HepG2 (cell line): ENCODE measurements at regions of chr6 and their contacts with region 1.

Region 1: GRCh38 chr6:35342258-35343091 is at the start of gene PPARD:
- DNase-seq: peak; percentile 93
- ATAC-seq: peak; percentile 95
- H3K4me3 ChIP-seq: peak within 1 kb of the TSS; percentile 74 to 89 (median 87)
- H3K27ac ChIP-seq: peak within 1 kb of the TSS; percentile 46
- H3K4me1 ChIP-seq: peaks cover 40% of the 10 kb centered on the region
- H3K27me3 ChIP-seq: no peaks in the 10 kb centered on the region; a peak in 1 of 5 replicates
- CTCF ChIP-seq: peak; percentile 100
- EP300 ChIP-seq: peak in 1 of 2 experiments; percentile 36; a peak in 1 of 4 replicates
- POLR2A ChIP-seq: peak; percentile 59 to 66
- RAD21 ChIP-seq: peak; percentile 100
- total RNA-seq, gene PPARD: 5.8 and 6.1 TPM in 2 replicates

Region 2: DNA sequence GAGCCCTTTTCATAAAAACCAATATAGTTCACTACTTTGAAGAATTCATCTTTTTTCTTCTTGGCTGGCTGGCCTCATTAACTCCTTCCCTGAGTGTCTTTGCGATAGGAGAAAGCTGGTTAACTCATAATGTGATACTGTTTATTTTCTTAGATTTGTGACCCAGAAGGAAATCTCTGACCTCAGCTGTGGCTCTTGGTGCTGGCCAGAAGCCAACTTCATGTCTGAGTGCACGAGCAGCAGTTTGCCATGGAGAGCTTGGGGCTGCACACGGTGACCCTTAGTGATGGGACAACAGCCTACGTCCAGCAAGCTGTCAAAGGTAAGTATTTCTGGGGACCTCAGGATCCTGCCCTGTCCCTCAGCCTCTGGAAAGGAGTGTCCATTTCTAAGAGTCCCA is 61.6 kb before region 1 on chr6:
- CTCF ChIA-PET with region 1: no interaction called
- POLR2A ChIA-PET with region 1: no interaction called
- in situ Hi-C with region 1: no loop called
- intact Hi-C with region 1: no loop called
- DNase-seq: no peak
- ATAC-seq: no peak
- H3K4me3 ChIP-seq: no peak overlapping the region
- H3K27ac ChIP-seq: no peak overlapping the region
- H3K4me1 ChIP-seq: no peaks in the 10 kb centered on the region
- H3K27me3 ChIP-seq: no peaks in the 10 kb centered on the region
- CTCF ChIP-seq: no peak
- EP300 ChIP-seq: no peak
- POLR2A ChIP-seq: no peak
- RAD21 ChIP-seq: no peak

Region 3: DNA sequence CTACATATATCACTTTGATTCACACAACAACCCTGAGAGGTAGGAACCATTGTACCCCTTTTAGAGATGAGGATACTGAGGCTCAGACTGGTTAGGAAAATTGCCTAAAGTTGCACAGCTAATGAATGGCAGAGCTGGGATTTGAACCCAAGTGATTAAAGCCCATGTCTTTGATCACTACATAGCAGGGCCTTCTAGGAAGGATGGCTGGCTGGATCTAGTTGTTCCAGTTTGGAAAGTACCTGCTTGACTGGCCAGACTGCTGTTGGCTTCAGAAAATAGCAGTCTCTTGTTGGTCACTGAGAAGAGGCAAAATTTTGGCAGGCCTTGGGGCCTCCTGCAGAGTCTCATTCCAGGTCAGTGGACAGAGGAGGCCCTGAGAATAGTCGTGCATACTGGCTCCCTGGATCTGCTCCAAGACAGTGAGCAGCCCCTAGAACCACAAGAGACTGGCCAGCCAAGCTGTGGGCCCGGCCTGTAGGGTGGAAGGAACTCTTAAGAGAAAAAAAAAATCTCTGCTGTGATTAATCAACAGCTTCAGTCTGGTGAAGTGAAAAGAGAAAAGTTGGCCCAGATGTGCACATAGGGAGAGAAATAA is 17.4 kb after region 1 on chr6:
- CTCF ChIA-PET with region 1: no interaction called
- POLR2A ChIA-PET with region 1: no interaction called
- in situ Hi-C with region 1: no loop called
- intact Hi-C with region 1: no loop called
- DNase-seq: no peak
- ATAC-seq: peak; percentile 35
- H3K4me3 ChIP-seq: no peak overlapping the region
- H3K27ac ChIP-seq: peak overlapping the region; percentile 67
- H3K4me1 ChIP-seq: peaks cover 28% of the 10 kb centered on the region
- H3K27me3 ChIP-seq: no peaks in the 10 kb centered on the region
- CTCF ChIP-seq: no peak
- EP300 ChIP-seq: no peak
- POLR2A ChIP-seq: no peak
- RAD21 ChIP-seq: no peak

Region 4: DNA sequence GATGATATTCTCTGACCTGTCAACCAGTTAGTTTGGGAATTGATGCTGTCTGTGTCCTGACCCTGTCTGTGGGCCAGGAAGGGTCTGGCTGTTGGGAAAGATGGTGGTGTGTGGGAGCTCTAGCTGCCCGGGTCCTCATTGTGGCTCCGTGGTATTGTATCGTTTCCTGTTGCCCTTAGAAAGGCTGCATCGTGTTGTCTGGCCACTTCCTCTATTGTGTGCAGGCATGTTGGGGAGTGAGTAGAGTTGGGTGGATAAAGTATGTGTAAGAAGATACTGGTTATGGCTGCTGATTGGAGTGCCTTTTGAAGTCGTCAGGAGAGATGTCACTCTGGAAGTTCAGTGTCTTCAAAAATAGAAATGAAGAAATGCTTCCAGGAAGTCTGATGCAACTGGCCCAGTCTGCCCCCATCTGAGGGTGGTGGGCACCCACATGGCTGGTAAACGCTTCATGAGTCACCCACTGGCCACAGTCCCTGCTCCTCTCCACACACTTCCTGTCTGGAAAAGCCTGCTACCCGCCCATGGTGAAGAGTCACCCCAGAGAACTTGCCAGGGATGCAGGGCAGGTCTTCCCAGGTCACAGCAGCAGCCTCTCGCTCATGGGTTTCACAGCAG is 27.8 kb after region 1 on chr6:
- CTCF ChIA-PET with region 1: no interaction called
- POLR2A ChIA-PET with region 1: interaction called, 18 read pairs
- in situ Hi-C with region 1: no loop called
- intact Hi-C with region 1: no loop called
- DNase-seq: peak; percentile 65
- ATAC-seq: peak; percentile 6; the same call in 1 of the 3 replicates
- H3K4me3 ChIP-seq: no peak overlapping the region
- H3K27ac ChIP-seq: peak overlapping the region; percentile 84
- H3K4me1 ChIP-seq: peaks cover 78% of the 10 kb centered on the region
- H3K27me3 ChIP-seq: no peaks in the 10 kb centered on the region
- CTCF ChIP-seq: no peak
- EP300 ChIP-seq: peak in 1 of 2 experiments; percentile 55; a peak in 1 of 4 replicates
- POLR2A ChIP-seq: no peak
- RAD21 ChIP-seq: no peak

Region 5: DNA sequence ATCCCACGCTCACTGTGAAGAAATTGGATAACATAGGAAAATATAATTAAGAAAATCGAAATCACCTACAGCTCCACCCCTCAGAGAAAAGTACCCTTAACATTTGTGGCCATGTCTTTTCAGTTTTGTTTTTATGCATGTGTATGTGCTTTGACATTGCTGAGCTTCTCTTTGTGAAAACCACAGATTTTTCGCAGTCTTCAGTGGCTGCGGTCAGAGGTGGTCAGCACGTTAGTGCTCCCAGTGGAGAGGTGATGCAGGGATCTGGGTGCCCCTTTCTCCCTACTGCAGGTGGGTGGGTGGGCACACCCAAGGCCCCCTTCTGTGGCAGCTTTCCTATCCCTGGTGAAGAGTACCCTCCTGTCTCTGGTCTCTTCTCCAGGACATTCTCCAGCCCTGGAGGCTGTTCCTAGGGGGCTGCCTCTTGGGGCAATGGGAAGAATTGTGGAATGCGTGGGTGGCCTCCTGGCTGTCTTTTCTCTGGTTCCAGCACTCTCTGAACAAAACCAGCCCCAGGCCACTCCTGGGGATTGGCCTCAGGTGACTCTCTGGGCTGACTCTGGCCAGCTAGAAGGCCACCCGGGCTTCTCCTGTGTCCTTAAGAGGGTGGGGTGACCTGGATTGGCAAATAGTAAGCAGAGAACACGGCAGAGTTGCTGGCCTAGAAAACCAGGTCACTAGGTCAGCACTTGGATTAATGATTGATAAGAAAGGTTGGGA is 59.8 kb after region 1 on chr6:
- CTCF ChIA-PET with region 1: no interaction called
- POLR2A ChIA-PET with region 1: no interaction called
- in situ Hi-C with region 1: loop called (anchors 5 kb)
- intact Hi-C with region 1: no loop called
- DNase-seq: peak; percentile 93
- ATAC-seq: peak; percentile 95
- H3K4me3 ChIP-seq: peak overlapping the region in 1 of 3 experiments; percentile 49; a peak in 2 of 6 replicates
- H3K27ac ChIP-seq: peak overlapping the region; percentile 63
- H3K4me1 ChIP-seq: peaks cover 53% of the 10 kb centered on the region
- H3K27me3 ChIP-seq: no peaks in the 10 kb centered on the region
- CTCF ChIP-seq: 0 out of 2 replicates have a peak, but pooled peaks have one; percentile 7
- EP300 ChIP-seq: peak in 1 of 2 experiments; percentile 85; a peak in 2 of 4 replicates
- POLR2A ChIP-seq: 0 out of 4 replicates have a peak, but pooled peaks of 1 of the 2 experiments have one; percentile 36
- RAD21 ChIP-seq: no peak

Region 6: GRCh38 chr6:35452186-35453090 is 110.0 kb after region 1 on chr6 and contains the start of gene FANCE:
- CTCF ChIA-PET with region 1: interaction called, 87 read pairs
- POLR2A ChIA-PET with region 1: interaction called, 19 read pairs
- in situ Hi-C with region 1: loop called (anchors 5 kb)
- intact Hi-C with region 1: loop called (anchors 1 kb)
- DNase-seq: peak; percentile 84
- ATAC-seq: peak; percentile 88
- H3K4me3 ChIP-seq: peak within 1 kb of the TSS; percentile 56 to 79 (median 77)
- H3K27ac ChIP-seq: peak within 1 kb of the TSS; percentile 54
- H3K4me1 ChIP-seq: peaks cover 49% of the 10 kb centered on the region
- H3K27me3 ChIP-seq: peaks cover 3 to 22% of the 10 kb centered on the region in 2 experiments; a peak in 2 of 5 replicates
- CTCF ChIP-seq: peak; percentile 31; the same call in 1 of the 2 replicates
- EP300 ChIP-seq: no peak
- POLR2A ChIP-seq: peak; percentile 31 to 68; a peak in 3 of 4 replicates
- RAD21 ChIP-seq: peak; percentile 62
- total RNA-seq, gene FANCE: 9.7 and 11.2 TPM in 2 replicates

Region 7: DNA sequence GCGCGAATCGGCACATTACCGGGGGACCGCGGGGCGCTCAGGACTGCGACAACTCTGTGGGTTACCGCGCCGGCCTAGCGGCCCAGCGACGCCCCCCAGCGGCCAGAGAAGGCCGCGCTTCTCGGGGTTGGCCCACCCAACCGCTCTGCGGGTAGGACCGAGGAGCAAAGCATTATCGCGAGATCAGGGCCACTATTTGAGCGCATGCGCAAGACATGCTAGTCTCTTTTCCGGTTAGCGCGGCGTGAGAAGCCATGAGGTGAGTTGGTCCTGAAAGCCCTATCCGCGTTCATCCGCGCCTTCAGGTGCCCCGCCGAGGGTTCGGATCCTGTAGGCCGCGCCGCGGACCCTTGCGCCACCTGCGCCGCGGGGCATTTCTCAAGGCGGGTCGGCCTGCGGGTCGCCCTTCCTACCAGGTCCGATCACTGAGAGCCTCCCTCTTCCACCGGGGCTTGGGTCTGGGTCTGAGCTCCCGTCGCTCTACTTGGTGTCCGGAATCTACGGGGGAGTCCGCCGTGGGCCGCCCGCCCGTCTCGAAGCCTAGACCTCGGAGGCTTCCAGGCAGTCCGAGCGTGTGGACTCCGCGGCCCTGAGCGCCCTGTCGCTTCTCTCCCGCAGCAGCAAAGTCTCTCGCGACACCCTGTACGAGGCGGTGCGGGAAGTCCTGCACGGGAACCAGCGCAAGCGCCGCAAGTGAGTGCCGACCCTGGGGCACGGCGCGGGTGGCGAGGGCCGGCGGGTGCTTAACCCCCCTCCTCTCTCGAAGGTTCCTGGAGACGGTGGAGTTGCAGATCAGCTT is 125.9 kb after region 1 on chr6 and contains the start of gene RPL10A:
- CTCF ChIA-PET with region 1: interaction called, 27 read pairs
- POLR2A ChIA-PET with region 1: interaction called, 7 read pairs
- in situ Hi-C with region 1: no loop called
- intact Hi-C with region 1: loop called (anchors 1 kb)
- DNase-seq: peak; percentile 98
- ATAC-seq: peak; percentile 83
- H3K4me3 ChIP-seq: peak within 1 kb of the TSS; percentile 85 to 98 (median 86)
- H3K27ac ChIP-seq: peak within 1 kb of the TSS; percentile 92
- H3K4me1 ChIP-seq: peaks cover 49% of the 10 kb centered on the region
- H3K27me3 ChIP-seq: no peaks in the 10 kb centered on the region; a peak in 1 of 5 replicates
- CTCF ChIP-seq: peak; percentile 100
- EP300 ChIP-seq: peak in 1 of 2 experiments; percentile 50; a peak in 1 of 4 replicates
- POLR2A ChIP-seq: peak in 1 of 2 experiments; percentile 100; a peak in 2 of 4 replicates
- RAD21 ChIP-seq: peak; percentile 98
- total RNA-seq, gene RPL10A: 1,854 and 2,285 TPM in 2 replicates

Region 8: DNA sequence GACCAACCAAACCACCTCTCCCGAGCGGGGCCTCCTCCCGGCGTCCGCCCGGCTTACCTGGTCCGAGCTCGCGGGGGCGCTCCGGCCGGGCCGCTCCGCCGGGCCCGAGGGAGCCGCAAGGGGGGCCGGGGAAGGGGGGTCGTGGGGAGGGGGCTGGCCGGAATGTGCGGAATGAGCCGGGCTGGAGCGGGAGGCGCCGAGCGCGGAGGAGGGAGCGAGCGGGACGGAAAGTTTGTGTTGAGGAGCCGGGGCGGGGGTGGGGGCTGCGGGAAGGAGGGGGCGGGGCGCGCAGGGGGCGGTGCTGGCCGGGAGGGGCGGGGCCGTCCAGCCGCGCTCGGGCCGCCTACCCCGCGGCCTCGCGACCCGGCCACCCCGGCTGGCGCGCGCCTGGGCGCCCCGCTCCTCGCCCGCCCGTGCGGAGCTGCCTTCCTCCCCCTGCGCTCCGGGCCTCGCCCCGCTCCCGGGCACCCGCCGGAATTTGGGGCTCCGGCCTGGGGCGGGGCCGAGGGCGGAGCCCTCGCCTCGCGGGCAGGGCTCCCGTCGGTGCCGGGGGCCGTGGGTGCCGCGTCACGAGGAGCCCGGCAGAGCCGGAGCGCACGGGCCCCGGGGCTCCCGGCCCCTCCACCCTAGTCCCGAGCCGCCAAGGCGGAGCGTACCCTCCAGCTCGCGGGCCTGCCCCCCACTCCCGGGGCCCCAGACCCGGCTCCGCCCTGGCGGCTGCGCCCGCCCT is 154.5 kb after region 1 on chr6 and contains the start of gene TEAD3:
- CTCF ChIA-PET with region 1: no interaction called
- POLR2A ChIA-PET with region 1: interaction called, 3 read pairs
- in situ Hi-C with region 1: no loop called
- intact Hi-C with region 1: loop called (anchors 1 kb)
- DNase-seq: peak; percentile 69
- ATAC-seq: peak; percentile 47
- H3K4me3 ChIP-seq: peak within 1 kb of the TSS; percentile 81 to 95 (median 94)
- H3K27ac ChIP-seq: peak within 1 kb of the TSS; percentile 84
- H3K4me1 ChIP-seq: peaks cover 63% of the 10 kb centered on the region
- H3K27me3 ChIP-seq: peaks cover 6 to 31% of the 10 kb centered on the region in 2 experiments; a peak in 4 of 5 replicates
- CTCF ChIP-seq: peak; percentile 41
- EP300 ChIP-seq: no peak
- POLR2A ChIP-seq: 0 out of 4 replicates have a peak, but pooled peaks of 1 of the 2 experiments have one; percentile 39
- RAD21 ChIP-seq: peak; percentile 43
- total RNA-seq, gene TEAD3: 14.4 and 15.1 TPM in 2 replicates